ENCODE measurements at regions of chr6 and their contacts with region 1.

Region 1: GRCh38 chr6:41936073-41936837 is 5.4 kb downstream of the CCND3 start:
- DNase-seq: peak; percentile 83
- H3K4me3 Mint-ChIP-seq: peak overlapping the region; percentile 99
- H3K27ac Mint-ChIP-seq: peak overlapping the region; percentile 84
- H3K4me1 Mint-ChIP-seq: peaks cover 77% of the 10 kb centered on the region
- H3K27me3 Mint-ChIP-seq: no peaks in the 10 kb centered on the region

Region 2: DNA sequence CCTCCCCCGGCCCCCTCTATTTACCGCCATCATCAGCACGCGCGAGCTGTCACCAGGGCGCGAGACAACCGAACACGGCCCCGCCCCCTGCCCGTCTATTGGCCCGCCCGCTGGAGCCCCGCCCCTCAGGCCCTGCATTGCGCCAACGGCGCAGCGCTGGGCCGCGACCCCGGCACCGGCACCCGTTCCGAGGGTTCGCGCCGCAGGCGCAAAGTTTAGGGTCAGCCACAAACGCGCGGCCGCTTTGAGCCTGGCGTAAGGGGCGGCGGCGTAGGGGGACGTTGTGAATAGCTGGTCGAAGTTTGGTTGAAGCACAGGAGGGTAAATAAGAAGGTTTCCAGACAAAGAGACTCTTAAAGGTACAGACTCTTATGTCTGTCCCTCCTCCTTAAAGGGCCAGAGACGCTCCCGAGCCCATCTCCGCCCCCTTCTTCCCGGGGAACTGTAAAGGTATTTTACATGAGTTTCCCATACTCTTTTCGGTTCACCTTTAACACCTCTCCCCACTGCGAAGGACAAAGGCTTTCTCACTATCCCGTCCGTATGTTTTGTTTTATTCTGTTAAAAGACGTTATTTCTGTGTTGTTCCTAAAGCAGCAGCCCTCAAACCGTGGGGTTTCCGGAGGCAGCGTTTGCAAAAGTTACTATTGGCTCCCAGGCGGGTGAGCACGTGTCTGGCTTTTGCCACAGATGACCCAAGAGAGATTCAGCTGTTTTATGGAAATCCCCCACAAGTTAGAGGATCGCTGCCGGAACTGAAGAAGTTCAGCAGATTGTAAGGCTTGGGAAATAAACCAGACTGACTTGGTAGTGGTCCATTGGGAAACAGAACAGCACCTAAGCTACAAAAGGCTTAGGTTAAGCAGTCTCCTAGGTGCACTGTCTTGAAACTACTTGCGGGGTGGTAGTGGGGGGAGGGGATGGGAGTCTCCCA is 40.7 kb before region 1 on chr6 and contains the start of gene USP49:
- intact Hi-C with region 1: loop called (anchors 1 kb)
- DNase-seq: peak; percentile 84
- H3K4me3 Mint-ChIP-seq: no peak within 1 kb of the TSS
- H3K27ac Mint-ChIP-seq: peak within 1 kb of the TSS; percentile 97
- H3K4me1 Mint-ChIP-seq: peaks cover 10% of the 10 kb centered on the region
- H3K27me3 Mint-ChIP-seq: no peaks in the 10 kb centered on the region
- total RNA-seq, gene USP49: 4.8 and 5.3 TPM in 2 replicates

Region 3: GRCh38 chr6:41920921-41921711 is 15.1 kb before region 1 on chr6 and contains the starts of genes BYSL and MED20:
- intact Hi-C with region 1: loop called (anchors 1 kb)
- DNase-seq: peak; percentile 89
- H3K4me3 Mint-ChIP-seq: peak within 1 kb of the TSS; percentile 98
- H3K27ac Mint-ChIP-seq: peak within 1 kb of the TSS; percentile 98
- H3K4me1 Mint-ChIP-seq: peaks cover 53% of the 10 kb centered on the region
- H3K27me3 Mint-ChIP-seq: no peaks in the 10 kb centered on the region
- total RNA-seq, gene BYSL: 82.9 and 88.5 TPM in 2 replicates
- total RNA-seq, gene MED20: 19.0 and 23.8 TPM in 2 replicates

Region 4: GRCh38 chr6:41976794-41977484 is 40.7 kb after region 1 on chr6:
- intact Hi-C with region 1: loop called (anchors 2 kb)
- DNase-seq: no peak
- H3K4me3 Mint-ChIP-seq: no peak overlapping the region
- H3K27ac Mint-ChIP-seq: peak overlapping the region; percentile 84
- H3K4me1 Mint-ChIP-seq: peaks cover 39% of the 10 kb centered on the region
- H3K27me3 Mint-ChIP-seq: no peaks in the 10 kb centered on the region

Region 5: DNA sequence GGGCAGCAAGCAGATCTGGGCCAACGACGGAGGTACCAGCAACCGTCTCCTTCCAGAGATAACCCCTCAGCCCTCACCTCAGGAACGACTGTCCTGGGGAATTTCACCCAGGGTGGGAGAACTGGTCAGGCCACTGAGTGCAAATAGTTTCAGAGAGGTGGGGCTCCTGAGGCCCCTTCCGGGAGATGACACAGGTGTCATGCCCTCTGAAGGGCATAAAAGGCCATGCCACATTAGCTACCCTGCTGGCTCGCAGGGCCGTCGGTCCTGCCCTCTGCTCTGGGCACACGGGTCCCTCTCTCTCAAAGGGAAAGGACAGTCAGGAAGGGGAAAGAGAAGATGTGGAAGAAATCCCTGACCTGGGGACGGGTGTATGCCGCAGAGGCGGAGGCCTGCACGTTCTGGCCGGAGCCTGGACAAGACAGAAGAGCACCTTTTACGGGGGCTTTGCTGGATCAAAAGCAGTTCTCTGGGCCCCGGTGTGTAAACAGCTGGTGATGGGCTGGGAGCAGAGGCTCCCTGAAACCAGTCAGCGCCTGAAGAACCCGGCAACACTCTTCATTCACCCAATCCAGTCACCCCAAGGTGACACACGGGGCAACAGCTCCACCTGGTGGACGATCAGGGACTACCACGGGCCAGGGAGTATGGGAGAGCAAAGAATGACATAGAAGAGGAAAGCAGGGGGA is 107.7 kb after region 1 on chr6:
- intact Hi-C with region 1: loop called (anchors 1 kb)
- DNase-seq: peak; percentile 87
- H3K4me3 Mint-ChIP-seq: peak overlapping the region; percentile 70
- H3K27ac Mint-ChIP-seq: peak overlapping the region; percentile 83
- H3K4me1 Mint-ChIP-seq: peaks cover 82% of the 10 kb centered on the region
- H3K27me3 Mint-ChIP-seq: no peaks in the 10 kb centered on the region

Region 6: DNA sequence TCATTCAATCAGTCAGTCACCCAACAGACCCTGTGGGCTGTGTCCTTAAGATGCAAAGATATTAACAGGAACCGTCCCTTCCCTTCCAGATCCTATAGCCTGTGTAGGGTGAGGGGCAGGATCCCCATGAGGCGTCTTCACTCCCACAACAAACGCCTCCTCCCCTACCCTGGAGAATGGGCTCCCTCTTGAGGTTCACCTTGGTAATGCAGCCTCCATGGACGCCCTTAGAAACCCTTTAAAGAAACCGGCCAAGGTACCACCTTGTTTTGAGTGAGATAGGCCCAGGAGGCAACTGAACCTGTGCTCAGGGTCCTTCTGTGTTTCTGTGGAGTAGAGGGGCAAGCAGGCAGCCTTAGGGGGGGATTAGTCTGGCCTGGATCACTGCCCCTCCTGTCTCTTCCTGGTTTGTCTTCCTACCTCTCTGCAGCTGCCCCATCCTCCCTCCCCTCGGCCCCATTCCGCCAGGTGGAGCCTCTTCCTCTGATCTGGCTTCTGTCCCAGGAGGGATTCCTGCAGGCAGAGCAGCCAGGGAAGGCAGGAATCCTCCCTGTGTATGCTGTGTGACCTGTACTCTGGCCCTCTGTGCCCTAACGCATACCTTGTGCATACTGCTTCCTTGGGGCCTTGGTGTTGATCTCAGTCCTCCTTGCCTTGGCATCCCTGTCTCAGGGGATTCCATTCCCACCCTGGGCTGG is 230.3 kb after region 1 on chr6:
- intact Hi-C with region 1: no loop called
- DNase-seq: peak; percentile 68
- H3K4me3 Mint-ChIP-seq: no peak overlapping the region
- H3K27ac Mint-ChIP-seq: no peak overlapping the region
- H3K4me1 Mint-ChIP-seq: peaks cover 7% of the 10 kb centered on the region
- H3K27me3 Mint-ChIP-seq: peaks cover 7% of the 10 kb centered on the region